HepG2 (cell line): ENCODE measurements at regions of chr5 and their contacts with region 1.

Region 1: GRCh38 chr5:149141224-149141956 is at the start of gene ABLIM3:
- DNase-seq: no peak
- ATAC-seq: peak; percentile 89
- H3K4me3 ChIP-seq: peak within 1 kb of the TSS; percentile 63 to 82 (median 71)
- H3K27ac ChIP-seq: no peak within 1 kb of the TSS
- H3K4me1 ChIP-seq: peaks cover 46% of the 10 kb centered on the region
- H3K27me3 ChIP-seq: peaks cover 0 to 11% of the 10 kb centered on the region in 2 experiments; a peak in 4 of 5 replicates
- CTCF ChIP-seq: peak; percentile 87
- EP300 ChIP-seq: no peak
- POLR2A ChIP-seq: no peak
- RAD21 ChIP-seq: peak; percentile 90
- total RNA-seq, gene ABLIM3: 0.53 and 0.67 TPM in 2 replicates

Region 2: DNA sequence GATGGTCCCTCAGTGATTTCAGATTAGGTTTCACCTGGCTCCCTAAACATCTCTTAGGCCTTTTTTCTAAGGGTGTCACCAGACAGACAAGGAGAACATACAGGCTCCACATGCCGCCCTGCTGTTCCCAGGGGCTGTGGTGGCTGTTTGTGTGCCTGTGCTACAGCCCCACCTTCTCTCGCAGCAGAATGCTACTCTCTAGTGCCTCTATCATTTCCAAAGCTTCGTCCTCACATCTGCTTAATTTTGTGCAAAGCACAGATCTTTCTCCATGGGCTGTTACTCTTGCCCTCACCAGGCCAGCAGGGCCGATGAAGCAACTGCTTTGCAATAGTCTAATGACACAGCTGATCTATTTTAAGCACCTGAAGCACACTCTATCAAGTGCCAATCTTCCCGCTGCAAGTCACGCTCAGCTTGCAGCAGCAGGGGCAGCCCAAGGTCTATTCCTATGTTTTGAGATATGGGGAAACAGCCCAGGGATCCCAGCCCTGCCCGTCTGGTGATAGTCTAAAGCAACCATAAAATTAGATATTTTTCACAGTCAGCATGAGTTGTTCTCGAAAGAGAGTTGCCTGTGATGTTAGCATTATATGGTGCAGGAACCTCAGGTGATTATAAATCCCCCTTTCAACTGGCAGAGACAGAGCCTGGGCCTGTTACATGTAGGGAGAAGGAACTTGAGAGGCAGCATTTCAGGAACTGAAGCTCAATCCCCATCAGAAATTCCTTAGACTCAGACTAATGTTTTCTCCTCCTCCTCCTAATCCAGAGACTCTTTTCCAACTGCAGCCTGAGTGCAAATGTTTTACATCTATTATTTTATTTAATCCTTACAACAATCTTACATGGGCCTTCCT is 12.6 kb after region 1 on chr5:
- CTCF ChIA-PET with region 1: interaction called, 3 read pairs
- POLR2A ChIA-PET with region 1: interaction called, 35 read pairs
- in situ Hi-C with region 1: no loop called
- intact Hi-C with region 1: loop called (anchors 1 kb)
- DNase-seq: peak; percentile 50
- ATAC-seq: peak; percentile 10; the same call in 1 of the 3 replicates
- H3K4me3 ChIP-seq: no peak overlapping the region
- H3K27ac ChIP-seq: peak overlapping the region; percentile 84
- H3K4me1 ChIP-seq: peaks cover 84% of the 10 kb centered on the region
- H3K27me3 ChIP-seq: no peaks in the 10 kb centered on the region
- CTCF ChIP-seq: no peak
- EP300 ChIP-seq: no peak
- POLR2A ChIP-seq: no peak
- RAD21 ChIP-seq: no peak

Region 3: GRCh38 chr5:149175346-149176105 is 34.1 kb after region 1 on chr5:
- CTCF ChIA-PET with region 1: no interaction called
- POLR2A ChIA-PET with region 1: interaction called, 68 read pairs
- in situ Hi-C with region 1: no loop called
- intact Hi-C with region 1: loop called (anchors 1 kb)
- DNase-seq: no peak
- ATAC-seq: no peak
- H3K4me3 ChIP-seq: no peak overlapping the region
- H3K27ac ChIP-seq: peak overlapping the region; percentile 100
- H3K4me1 ChIP-seq: peaks cover 63% of the 10 kb centered on the region
- H3K27me3 ChIP-seq: no peaks in the 10 kb centered on the region
- CTCF ChIP-seq: no peak
- EP300 ChIP-seq: no peak
- POLR2A ChIP-seq: no peak
- RAD21 ChIP-seq: no peak

Region 4: GRCh38 chr5:149228618-149229297 is 87.4 kb after region 1 on chr5:
- CTCF ChIA-PET with region 1: interaction called, 45 read pairs
- POLR2A ChIA-PET with region 1: interaction called, 11 read pairs
- in situ Hi-C with region 1: loop called (anchors 5 kb)
- intact Hi-C with region 1: loop called (anchors 1 kb)
- DNase-seq: peak; percentile 79
- ATAC-seq: peak; percentile 97
- H3K4me3 ChIP-seq: no peak overlapping the region
- H3K27ac ChIP-seq: no peak overlapping the region
- H3K4me1 ChIP-seq: peaks cover 28% of the 10 kb centered on the region
- H3K27me3 ChIP-seq: no peaks in the 10 kb centered on the region
- CTCF ChIP-seq: peak; percentile 77
- EP300 ChIP-seq: no peak
- POLR2A ChIP-seq: no peak
- RAD21 ChIP-seq: peak; percentile 82

Region 5: DNA sequence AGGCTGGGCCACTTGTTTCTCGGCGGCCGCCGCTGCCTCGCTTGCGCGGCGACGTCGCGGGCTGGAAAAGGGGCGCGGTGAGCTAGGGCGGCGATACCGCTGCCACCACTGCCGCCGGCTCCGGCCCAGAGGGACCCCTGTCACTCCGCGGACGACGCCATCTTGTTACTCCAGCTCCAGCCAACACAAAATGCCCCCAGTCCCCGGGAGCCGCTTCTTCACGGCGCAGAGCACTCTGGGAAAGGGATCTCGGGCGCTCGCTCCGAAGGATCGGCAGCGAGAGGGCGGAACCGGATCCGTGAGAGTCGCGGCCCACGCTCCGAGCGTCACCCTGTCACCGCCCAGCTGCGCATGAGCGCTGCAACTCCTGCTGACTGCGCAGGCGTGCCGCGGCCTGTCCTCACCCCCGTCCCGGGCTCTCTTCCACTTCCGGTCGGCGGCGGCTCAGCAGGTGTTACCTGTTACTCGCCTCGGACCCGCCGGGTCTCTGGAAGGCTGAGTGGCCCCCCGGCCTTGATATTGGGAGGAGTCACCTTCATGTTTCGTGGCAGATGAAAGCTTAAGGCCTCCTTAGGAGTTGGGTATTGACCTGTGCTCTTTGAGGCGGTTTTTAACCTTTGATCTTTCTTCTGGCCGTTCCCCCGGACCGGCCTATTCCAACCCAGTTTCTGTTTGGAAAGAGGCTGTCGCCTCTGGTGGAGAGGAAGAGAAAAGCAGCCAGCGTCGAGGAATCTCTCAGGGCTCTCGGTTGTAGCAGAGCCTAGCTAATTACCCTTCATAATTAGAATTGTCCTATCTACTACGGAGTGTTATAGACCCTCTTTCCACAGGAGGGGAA is 410.0 kb after region 1 on chr5 and contains the start of gene CSNK1A1:
- CTCF ChIA-PET with region 1: no interaction called
- POLR2A ChIA-PET with region 1: no interaction called
- in situ Hi-C with region 1: loop called (anchors 25 kb)
- intact Hi-C with region 1: no loop called
- DNase-seq: peak; percentile 95
- ATAC-seq: peak; percentile 93
- H3K4me3 ChIP-seq: peak within 1 kb of the TSS; percentile 95 to 99 (median 98)
- H3K27ac ChIP-seq: peak within 1 kb of the TSS; percentile 97
- H3K4me1 ChIP-seq: peaks cover 35% of the 10 kb centered on the region
- H3K27me3 ChIP-seq: no peaks in the 10 kb centered on the region; a peak in 1 of 5 replicates
- CTCF ChIP-seq: peak; percentile 76
- EP300 ChIP-seq: peak in 1 of 2 experiments; percentile 58; a peak in 1 of 4 replicates
- POLR2A ChIP-seq: peak; percentile 86 to 88
- RAD21 ChIP-seq: peak; percentile 65
- total RNA-seq, gene CSNK1A1: 149 and 210 TPM in 2 replicates